HEK293 (cell line): ENCODE measurements at regions of chr17 and their contacts with region 1.

Region 1: GRCh38 chr17:41548844-41549595 is 20.9 kb upstream of the KRT19 start:
- H3K4me3 ChIP-seq: no peak overlapping the region
- H3K27ac ChIP-seq: peak overlapping the region; percentile 38
- H3K4me1 ChIP-seq: no peaks in the 10 kb centered on the region
- CTCF ChIP-seq: peak; percentile 80

Region 2: GRCh38 chr17:40827746-40828453 is 721.1 kb before region 1 on chr17:
- CTCF ChIA-PET with region 1: interaction called, 16 read pairs
- POLR2A ChIA-PET with region 1: no interaction called
- H3K4me3 ChIP-seq: no peak overlapping the region
- H3K27ac ChIP-seq: peak overlapping the region; percentile 6; the same call in 1 of the 2 replicates
- H3K4me1 ChIP-seq: peaks cover 16% of the 10 kb centered on the region
- CTCF ChIP-seq: no peak; the same call in 1 of the 2 replicates

Region 3: DNA sequence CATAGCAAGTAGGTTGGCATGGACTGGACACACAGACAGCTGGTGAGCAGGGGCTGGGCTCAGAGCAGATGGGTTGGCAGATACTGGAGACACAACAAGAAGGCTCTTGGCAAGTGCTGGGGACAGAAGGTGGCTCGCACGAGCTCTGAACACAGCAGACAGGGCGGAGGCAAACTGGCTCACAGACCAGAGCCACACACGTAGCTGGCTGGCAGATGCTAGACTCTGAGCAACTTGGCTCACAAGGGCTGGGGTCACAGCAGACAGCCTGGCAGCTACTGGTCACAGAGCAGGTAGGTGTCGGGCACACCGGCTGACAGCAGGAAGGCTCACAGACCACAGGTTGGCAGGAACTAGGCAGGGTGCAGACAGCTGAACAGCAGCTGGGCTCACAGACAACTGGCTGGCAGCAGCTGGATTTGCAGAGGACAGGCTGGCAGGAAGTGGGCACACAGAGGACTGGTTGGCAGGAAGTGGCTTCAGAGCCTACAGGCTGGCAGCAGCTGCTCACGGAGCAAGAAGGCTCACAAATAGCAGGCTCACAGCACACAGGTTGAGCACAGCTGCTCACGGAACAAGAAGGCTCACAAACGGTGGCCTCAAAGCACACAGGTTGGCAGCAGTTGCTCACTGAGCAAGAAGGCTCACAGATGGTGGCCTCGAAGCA is 240.6 kb before region 1 on chr17:
- CTCF ChIA-PET with region 1: interaction called, 10 read pairs
- POLR2A ChIA-PET with region 1: no interaction called
- H3K4me3 ChIP-seq: no peak overlapping the region
- H3K27ac ChIP-seq: no peak overlapping the region
- H3K4me1 ChIP-seq: no peaks in the 10 kb centered on the region
- CTCF ChIP-seq: no peak

Region 4: DNA sequence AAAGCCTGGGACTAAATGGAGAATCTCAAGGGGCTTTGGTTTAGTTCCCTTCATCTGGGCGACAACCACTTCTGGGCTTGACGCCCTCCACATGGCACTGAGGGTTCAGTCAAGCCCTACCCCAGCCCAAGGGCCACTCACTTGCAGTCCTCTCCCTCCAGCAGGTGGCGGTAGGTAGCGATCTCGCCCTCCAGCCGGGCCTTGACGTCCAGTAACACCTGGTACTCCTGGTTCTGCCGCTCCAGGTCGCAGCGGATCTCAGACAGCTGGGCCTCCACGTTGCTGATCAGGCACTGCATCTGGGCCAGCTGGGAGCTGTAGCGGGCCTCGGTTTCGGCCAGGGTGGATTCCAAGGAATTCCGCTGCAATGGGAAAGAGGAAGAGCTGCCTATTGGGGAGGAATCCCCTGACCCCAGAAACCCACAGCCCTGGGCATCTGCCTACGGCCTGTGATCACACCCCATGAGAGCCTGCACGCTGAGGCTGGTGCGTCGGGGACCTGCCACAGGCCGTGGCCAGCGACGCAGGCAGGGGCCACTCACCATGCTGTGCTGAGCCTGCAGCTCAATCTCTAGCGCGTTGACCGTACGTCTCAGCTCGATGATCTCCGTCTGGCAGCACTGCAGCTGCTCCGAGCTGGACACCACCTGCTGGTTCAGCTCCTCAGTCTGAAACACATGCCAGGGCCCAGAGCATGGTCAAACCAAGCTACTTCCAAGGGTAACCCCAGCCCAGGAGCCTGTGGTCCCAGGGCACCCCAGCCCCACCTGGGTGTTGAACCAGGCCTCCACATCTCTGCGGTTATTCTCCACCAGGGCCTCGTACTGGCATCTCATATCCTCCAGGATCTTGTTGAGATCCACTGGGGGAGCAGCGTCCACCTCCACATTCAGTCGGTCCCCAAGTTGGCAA is 62.0 kb before region 1 on chr17:
- CTCF ChIA-PET with region 1: interaction called, 63 read pairs
- POLR2A ChIA-PET with region 1: no interaction called
- H3K4me3 ChIP-seq: no peak overlapping the region
- H3K27ac ChIP-seq: no peak overlapping the region
- H3K4me1 ChIP-seq: no peaks in the 10 kb centered on the region
- CTCF ChIP-seq: 0 out of 2 replicates have a peak, but pooled peaks have one; percentile 17

Region 5: DNA sequence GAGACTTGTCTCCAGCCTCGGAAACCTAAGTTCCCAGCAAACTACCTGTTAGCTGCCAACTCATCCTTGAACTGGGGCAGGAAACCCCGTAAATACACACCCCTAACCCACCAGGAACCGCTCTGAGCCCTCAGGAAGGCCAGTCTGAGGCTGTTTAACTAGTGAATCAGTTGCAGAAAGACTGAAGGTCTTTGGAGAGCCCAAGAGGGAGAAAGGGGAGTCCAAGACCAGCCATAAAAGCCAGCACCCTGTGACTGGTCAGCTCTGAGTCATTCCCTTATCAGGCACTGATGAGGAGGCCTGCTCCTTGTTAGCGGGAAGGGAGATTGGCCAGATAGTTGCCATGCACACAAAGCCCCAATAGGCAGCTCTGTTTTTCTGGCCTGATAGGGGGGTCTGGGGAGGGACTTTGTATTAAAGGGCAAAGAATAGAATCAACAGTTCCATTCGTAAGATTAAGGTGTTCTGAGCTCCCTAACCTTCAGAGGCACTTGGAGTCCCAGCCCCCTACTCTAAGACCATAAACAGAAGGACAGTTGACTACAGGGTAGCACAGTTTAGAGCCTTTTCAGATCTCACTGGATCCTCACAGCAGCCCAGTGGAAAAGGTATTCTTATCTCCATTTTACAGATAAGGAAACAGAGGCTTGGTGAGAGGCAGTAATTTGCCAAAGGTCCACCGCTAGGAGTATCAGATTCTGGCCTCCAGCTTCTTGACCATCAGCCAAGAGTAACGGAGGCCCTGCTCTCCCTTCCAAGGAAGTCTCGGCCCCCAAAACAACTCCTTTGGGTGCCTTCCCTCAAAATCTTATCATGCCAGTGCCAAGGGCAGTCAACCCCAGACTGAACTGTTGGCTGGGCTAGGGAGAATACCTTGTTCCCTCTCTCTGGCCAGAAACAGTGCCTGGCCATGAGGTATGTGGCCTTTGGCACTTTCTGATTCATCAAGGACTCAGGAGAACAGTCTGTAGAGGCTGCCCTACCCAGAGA is 18.7 kb before region 1 on chr17:
- CTCF ChIA-PET with region 1: interaction called, 113 read pairs
- POLR2A ChIA-PET with region 1: interaction called, 6 read pairs
- H3K4me3 ChIP-seq: no peak overlapping the region
- H3K27ac ChIP-seq: peak overlapping the region; percentile 32
- H3K4me1 ChIP-seq: peaks cover 14% of the 10 kb centered on the region
- CTCF ChIP-seq: no peak

Region 6: DNA sequence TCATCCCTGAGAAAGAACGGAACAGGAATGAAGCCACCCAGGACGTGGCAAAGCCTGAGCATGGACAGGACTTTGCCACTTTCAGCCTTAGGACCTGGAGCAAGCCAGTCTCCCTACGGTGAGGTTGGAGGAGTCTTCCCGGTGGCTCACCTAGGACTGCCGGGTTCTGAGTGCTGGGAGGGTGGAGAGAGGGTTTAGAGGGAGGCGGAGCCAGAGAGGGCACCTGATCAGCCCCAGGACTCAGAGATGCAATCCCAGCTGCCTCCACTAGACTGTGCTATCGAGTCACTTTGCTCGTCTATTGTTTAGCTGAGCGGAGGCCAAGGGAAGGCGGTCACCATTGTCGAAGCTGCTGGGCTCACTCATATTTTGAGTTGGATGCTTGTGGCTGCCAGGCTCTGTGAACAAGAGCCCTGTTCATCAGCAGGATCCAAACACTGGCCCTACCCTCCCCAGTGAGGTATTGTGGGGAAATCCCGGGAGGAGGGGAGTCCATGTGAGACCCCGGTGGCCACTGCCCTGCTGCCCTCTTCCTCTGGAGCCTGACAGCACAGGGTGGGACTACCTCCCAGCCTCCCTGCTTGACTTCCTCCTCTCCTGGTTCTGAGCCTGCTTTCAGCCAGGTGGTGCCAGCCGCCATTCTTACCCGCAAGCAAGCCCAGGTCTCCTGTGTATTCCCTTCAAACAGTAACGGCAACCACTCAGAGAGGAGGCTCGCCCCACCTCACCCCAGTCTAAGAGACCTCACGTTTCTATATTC is 30.6 kb after region 1 on chr17:
- CTCF ChIA-PET with region 1: interaction called, 30 read pairs
- POLR2A ChIA-PET with region 1: no interaction called
- H3K4me3 ChIP-seq: no peak overlapping the region
- H3K27ac ChIP-seq: no peak overlapping the region
- H3K4me1 ChIP-seq: no peaks in the 10 kb centered on the region; the same call in 1 of the 2 replicates
- CTCF ChIP-seq: peak; percentile 89

Region 7: DNA sequence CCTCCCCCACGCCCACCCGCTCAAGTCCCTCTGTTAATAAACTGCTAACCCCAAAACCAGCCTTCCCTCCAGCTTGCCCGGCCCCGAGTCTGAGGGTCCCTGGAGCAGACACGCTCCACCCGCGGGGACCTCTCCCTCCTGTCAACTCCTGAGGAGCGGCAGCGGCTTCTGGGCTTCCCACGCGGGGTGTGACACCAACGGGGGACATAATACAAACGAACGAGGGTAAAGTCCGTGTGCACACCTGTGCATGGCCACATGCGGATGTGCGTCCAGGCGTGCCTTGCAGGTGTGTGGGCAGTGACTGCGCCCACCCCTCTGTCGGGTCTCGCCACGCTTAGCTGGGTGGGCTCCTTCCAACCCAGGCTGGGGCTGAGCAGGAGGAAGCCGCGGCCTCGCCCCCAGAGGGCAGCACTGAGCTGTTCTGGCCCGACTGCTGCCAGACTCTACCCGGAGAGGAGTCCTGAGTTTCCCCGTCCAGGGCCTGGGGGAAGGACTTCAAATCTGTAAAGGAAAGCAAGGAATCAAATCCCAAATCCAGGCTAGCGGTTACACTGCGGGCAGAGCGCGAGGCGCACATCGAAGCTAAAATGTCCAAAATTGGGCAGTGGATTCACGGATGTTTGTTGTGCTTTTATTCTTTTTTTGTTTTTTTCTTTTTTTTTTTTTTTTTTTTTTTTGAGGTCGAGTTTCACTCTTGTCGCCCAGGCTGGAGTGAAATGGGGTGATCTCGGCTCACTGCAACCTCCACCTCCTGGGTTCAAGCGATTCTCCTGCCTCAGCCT is 99.6 kb after region 1 on chr17:
- CTCF ChIA-PET with region 1: interaction called, 416 read pairs
- POLR2A ChIA-PET with region 1: interaction called, 7 read pairs
- H3K4me3 ChIP-seq: peak overlapping the region; percentile 42
- H3K27ac ChIP-seq: no peak overlapping the region; the same call in 1 of the 2 replicates
- H3K4me1 ChIP-seq: no peaks in the 10 kb centered on the region
- CTCF ChIP-seq: peak; percentile 93